Right ventricle myocardium inferior (tissue), 1 donor: ENCODE measurements at regions of chr14 and their contacts with region 1.

Region 1: GRCh38 chr14:76918751-76919543 is 92.7 kb downstream of the LRRC74A start:
- DNase-seq: peak; percentile 96
- ATAC-seq: peak; percentile 89

Region 2: GRCh38 chr14:76956316-76957090 is 37.6 kb after region 1 on chr14:
- intact Hi-C with region 1: loop called (anchors 2 kb)
- DNase-seq: peak; percentile 95
- ATAC-seq: peak; percentile 85

Region 3: DNA sequence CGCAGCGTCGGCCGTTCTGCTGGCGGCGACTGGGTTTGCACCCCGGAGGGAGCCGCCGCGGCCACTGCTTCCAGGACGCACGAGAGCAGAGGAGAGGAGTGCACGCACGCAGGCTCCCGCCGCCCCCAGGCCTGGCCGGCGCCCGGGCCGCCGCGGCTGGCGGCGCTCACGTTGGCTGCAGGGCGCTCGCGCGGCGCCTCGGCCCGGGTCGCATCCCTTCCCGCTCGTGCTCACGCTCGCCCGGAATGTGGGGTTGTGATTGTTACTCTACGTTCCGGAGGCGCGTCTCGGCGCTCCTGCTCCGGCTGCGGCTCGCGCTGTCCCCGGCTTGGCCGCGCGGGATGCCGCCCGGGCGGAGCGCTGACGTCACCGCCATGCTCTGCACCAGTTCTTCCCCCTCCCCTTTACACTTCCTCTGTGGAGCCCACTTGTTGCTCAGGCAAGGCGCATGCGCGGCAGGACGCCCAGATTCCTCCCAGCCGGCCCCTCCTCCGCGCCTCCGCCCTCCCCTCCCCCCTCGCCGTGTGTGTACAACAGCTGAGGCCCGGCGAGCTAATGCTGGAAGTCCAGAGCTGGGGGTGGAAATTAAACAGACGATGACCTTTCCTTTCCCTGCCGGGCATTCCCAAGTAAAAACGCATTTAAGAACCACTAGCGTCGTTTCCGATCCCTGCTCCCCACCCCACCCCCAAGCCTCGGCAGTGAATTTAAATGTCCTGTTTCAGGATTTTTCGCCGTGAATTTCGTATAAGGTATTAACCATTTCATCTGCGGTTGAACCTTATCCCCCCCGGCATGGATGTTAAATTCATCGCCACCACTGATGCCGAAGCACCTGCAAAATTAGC is 109.7 kb after region 1 on chr14 and contains the start of gene IRF2BPL:
- intact Hi-C with region 1: loop called (anchors 1 kb)
- DNase-seq: peak; percentile 99
- ATAC-seq: peak; percentile 74
- total RNA-seq, gene IRF2BPL: 41.1 TPM

Region 4: DNA sequence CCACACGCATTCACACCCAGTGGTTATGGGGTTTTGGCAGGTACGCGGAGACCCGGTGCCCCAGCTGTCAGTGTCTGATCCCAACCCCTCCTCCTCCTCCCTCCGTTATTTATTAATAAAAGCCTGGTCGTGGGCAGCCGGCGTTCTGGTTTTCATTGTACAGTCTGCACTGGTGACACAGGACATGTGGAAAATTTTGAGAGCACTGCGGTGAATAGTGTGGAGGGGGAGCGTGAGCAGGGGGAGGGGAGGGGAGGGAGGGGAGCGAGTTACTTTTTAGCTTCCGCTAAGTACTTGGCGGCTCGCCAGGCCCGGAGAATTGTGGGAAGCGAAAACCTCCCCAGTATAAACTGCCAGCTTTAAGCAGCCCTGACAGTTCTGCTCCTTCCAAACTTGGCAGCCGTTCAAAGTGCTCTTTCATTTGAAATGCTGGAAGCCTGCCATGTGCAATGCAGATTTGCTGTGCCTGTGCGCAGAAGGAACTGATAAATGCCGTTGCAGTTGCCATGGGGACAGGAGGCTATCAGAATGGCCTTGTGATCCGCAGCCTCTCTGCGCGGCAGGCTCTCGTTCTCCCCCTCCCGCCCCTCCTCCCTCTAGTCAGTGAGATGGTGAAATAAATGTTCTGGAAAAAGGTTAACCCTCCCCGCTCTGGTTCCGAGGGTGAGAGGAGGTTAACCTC is 121.3 kb after region 1 on chr14:
- intact Hi-C with region 1: loop called (anchors 2 kb)
- DNase-seq: peak; percentile 100
- ATAC-seq: peak; percentile 85

Region 5: DNA sequence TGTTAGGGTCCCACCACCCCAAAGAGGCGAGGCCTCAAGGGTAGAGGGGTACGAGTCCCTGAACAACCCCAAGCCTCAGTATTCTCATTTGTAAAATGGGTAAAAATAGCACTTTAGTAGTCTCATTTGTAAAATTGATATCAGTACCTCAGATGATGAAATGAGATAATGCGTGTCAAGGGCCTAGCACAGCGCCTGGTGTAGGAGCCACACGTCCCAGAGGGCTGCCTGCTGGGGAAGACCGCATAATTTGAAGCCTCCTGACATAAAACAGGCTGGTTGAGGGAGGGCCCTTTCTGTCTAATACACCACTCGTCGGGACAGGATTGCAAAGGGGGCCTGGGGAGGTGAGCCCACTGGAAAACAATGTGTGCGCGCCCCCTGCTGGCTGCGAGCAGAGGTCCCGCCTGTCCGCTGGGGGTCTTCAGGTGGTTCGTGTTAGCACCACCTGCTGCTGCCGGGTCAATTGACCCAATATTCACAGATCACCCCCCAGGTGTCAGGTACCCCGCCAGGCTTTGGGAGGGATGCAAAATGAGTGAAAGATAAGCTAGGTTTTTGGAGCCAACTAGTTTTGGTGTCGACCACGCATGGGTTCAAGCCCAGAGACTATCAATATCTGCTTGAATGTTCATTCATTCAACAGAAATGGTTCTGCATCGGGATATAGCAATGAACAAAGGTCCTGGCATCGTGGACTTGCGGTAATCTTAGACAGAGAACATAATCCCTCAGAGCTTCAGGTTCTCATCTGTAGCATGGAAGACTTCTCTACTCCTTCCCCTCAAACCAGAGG is 134.3 kb after region 1 on chr14:
- intact Hi-C with region 1: loop called (anchors 1 kb)
- DNase-seq: peak; percentile 90
- ATAC-seq: peak; percentile 72

Region 6: DNA sequence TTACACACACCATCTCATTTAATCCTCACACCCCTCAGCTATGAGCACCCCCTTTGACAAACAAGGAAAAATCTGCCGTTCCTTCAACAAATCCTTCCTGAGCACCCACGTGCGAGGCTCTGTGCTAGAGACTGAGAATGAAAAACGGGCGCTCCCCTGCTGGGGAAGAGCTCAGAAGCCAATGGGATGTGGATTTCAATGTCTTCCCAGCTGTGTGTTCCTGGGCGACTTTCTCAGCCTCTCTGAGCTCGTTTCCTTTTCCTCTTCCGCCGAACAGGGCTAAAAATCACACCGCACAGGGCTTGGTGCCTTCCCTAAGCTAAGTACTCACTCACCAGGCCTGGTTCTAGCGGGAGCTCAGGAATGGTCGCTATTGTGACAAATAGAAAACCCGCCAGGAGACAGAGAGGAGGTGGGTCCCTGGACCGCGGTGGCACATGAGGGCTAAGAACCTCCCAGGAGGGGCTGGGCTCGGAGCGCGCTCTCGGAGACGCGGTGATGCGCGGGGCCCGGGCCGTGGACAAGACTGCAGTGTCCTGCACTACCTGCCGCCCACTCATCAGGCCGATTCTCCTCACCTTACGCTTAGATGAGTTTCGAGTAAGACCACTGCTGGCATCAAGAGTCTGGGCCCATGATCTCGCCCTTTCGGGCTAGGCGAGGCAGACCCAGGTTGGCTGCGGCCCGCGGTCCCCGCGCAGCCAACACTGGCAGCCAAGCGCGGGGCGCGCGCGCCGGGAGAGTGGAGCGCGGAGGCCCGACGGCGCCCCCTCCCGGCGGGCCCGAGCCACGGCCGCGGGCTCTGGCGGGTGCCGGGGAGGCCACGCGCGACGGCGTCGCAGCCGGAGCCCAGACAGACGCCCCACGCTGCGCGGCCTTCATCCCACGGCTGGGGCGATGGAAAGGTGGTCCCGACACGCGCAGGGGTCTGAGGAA is 205.7 kb after region 1 on chr14:
- intact Hi-C with region 1: no loop called
- DNase-seq: peak; percentile 82
- ATAC-seq: peak; percentile 68